Activated CD4-positive, alpha-beta T cell treated with anti-CD3 and anti-CD28 coated beads for 36 hours (primary cell): ENCODE measurements at regions of chr11 and their contacts with region 1.

Region 1: GRCh38 chr11:129434641-129435498 is 59.2 kb downstream of the BARX2 start:
- DNase-seq: no peak
- ATAC-seq: peak; percentile 74
- H3K4me3 Mint-ChIP-seq: no peak overlapping the region
- H3K27ac Mint-ChIP-seq: peak overlapping the region; percentile 59
- H3K4me1 Mint-ChIP-seq: peaks cover 27% of the 10 kb centered on the region
- H3K27me3 Mint-ChIP-seq: peaks cover 11% of the 10 kb centered on the region

Region 2: DNA sequence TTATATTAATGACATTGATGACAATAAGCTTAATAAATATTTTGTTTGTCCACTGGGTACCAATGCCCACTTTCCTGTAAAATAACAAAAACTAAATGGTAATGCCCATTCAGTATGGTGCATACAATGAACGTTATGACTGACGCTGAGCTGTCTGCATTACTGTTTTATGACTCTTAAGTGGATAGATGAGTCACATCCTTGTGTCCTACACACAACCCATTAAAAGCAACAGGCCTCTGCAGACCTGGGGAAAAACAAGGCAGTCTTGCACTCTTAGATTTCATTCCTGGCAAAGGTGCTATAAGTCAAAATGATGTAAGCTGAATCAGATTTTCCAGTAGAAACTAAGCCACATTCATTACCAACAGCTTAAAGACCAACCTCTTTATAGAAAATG is 204.4 kb after region 1 on chr11:
- CTCF ChIA-PET with region 1: interaction called, 3 read pairs
- POLR2A ChIA-PET with region 1: interaction called, 4 read pairs
- intact Hi-C with region 1: loop called (anchors 2 kb)
- DNase-seq: peak; percentile 66
- ATAC-seq: peak; percentile 81
- H3K4me3 Mint-ChIP-seq: no peak overlapping the region
- H3K27ac Mint-ChIP-seq: peak overlapping the region; percentile 72
- H3K4me1 Mint-ChIP-seq: peaks cover 75% of the 10 kb centered on the region
- H3K27me3 Mint-ChIP-seq: peaks cover 3% of the 10 kb centered on the region

Region 3: DNA sequence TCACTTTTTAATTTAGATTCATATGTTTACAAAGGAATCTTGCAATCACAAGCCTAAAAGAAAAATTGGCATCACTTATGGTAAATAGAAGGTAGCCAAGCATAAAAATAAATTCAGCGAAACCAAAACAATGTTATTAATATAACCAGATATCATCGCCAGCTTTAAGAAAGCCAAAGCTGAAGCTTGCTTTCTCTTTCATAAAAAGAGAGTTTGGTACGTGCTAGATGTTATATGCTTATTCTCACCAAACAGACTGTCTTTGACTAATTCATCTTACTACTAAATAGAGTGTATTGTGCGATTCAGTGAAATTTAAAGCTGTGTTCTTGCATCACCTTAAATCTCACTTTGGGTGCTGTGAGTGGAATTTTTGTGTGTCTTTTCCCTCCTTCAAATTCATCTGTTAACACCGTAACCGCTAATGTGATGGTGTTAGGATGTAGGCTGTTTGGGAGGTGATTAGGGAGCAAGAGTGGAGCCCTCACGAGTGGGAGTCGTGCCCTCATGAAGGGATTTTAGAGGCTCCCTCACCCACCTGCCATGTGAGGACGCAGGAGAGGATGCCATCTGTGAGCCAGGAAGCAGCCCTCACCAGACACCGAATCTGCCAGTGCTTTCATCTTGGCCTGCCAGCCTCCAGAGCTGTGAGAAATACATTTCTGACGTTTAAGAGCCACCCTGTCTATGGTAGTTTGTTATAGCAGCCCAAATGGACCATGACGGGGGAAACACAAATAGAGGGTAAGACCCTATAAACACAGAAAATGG is 246.7 kb after region 1 on chr11:
- CTCF ChIA-PET with region 1: no interaction called
- POLR2A ChIA-PET with region 1: no interaction called
- intact Hi-C with region 1: no loop called
- DNase-seq: no peak
- ATAC-seq: no peak
- H3K4me3 Mint-ChIP-seq: no peak overlapping the region
- H3K27ac Mint-ChIP-seq: no peak overlapping the region
- H3K4me1 Mint-ChIP-seq: no peaks in the 10 kb centered on the region
- H3K27me3 Mint-ChIP-seq: peaks cover 5% of the 10 kb centered on the region